Naive thymus-derived CD4-positive, alpha-beta T cell (primary cell): ENCODE measurements at regions of chr1 and their contacts with region 1.

Region 1: GRCh38 chr1:154352581-154353459 is 27.5 kb downstream of the ATP8B2 start:
- DNase-seq: peak in 8 of 9 donors; percentile 45 to 58 (median 52)
- ATAC-seq: peak; percentile 84
- H3K4me3 ChIP-seq: peak overlapping the region; percentile 79
- H3K4me3 Mint-ChIP-seq: peak overlapping the region; percentile 76 to 98 (median 91)
- H3K27ac ChIP-seq: peak overlapping the region; percentile 74
- H3K27ac Mint-ChIP-seq: peak overlapping the region; percentile 66 to 97 (median 88)
- H3K4me1 ChIP-seq: peaks cover 13 to 32% of the 10 kb centered on the region in 2 donors
- H3K4me1 Mint-ChIP-seq: peaks cover 29 to 64% (median 48%) of the 10 kb centered on the region in 7 donors
- H3K27me3 ChIP-seq: no peaks in the 10 kb centered on the region
- H3K27me3 Mint-ChIP-seq: peaks cover 0 to 2% (median 0%) of the 10 kb centered on the region in 5 donors

Region 2: GRCh38 chr1:153943991-153944826 is 408.6 kb before region 1 on chr1:
- CTCF ChIA-PET with region 1: no interaction called
- POLR2A ChIA-PET with region 1: no interaction called
- intact Hi-C with region 1: no loop called
- DNase-seq: peak in 1 of 9 donors; percentile 35
- ATAC-seq: no peak
- H3K4me3 ChIP-seq: peak overlapping the region; percentile 94
- H3K4me3 Mint-ChIP-seq: peak overlapping the region; percentile 93 to 99 (median 96)
- H3K27ac ChIP-seq: peak overlapping the region; percentile 89
- H3K27ac Mint-ChIP-seq: peak overlapping the region; percentile 90 to 98 (median 96)
- H3K4me1 ChIP-seq: peaks cover 23 to 25% of the 10 kb centered on the region in 2 donors
- H3K4me1 Mint-ChIP-seq: peaks cover 20 to 52% (median 41%) of the 10 kb centered on the region in 7 donors
- H3K27me3 ChIP-seq: no peaks in the 10 kb centered on the region
- H3K27me3 Mint-ChIP-seq: no peaks in the 10 kb centered on the region

Region 3: DNA sequence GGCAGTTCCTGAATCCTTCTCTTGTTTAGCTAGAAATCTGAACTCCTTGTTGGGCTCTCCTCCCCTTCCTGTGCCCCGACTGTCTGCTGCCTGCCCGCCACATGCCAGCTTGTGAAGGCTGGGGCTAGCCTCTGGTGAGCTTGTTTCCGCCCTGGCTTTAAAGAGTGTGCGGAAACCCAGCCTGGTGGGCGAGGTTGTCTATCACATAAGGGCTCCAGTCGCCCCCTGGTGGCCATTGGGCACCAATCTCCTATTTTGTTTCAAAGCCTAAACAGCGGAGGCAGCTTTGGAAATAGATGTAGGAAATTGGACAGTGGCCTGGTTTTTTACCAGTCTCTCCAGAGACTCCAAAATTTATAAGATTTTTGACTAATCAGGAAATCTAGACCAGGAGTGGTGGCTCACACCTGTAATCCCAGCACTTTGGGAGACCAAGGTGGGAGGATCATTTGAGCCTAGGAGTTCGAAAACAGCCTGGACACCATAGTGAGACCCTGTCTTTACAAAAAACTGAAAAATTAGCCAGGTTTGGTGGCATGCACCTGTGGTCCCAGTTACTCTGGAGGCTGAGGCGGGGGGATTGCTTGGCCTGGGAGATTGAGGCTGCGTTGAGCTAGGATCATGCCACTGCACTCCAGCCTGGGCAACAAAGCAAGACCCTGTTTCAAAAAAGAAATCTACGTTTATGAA is 17.6 kb before region 1 on chr1:
- CTCF ChIA-PET with region 1: interaction called, 129 read pairs
- POLR2A ChIA-PET with region 1: interaction called, 160 read pairs
- intact Hi-C with region 1: no loop called
- DNase-seq: peak; percentile 74 to 91 (median 87)
- ATAC-seq: peak; percentile 99
- H3K4me3 ChIP-seq: peak overlapping the region; percentile 23
- H3K4me3 Mint-ChIP-seq: peak overlapping the region; percentile 60 to 85 (median 72)
- H3K27ac ChIP-seq: peak overlapping the region; percentile 68
- H3K27ac Mint-ChIP-seq: peak overlapping the region; percentile 87 to 97 (median 95)
- H3K4me1 ChIP-seq: peaks cover 73% of the 10 kb centered on the region in 2 donors
- H3K4me1 Mint-ChIP-seq: peaks cover 50 to 88% (median 77%) of the 10 kb centered on the region in 7 donors
- H3K27me3 ChIP-seq: no peaks in the 10 kb centered on the region
- H3K27me3 Mint-ChIP-seq: no peaks in the 10 kb centered on the region

Region 4: GRCh38 chr1:154463512-154463990 is 110.7 kb after region 1 on chr1:
- CTCF ChIA-PET with region 1: interaction called, 3 read pairs
- POLR2A ChIA-PET with region 1: interaction called, 3 read pairs
- intact Hi-C with region 1: loop called in 1 of 2 experiments (anchors 1 kb)
- DNase-seq: peak in 8 of 9 donors; percentile 50 to 79 (median 70)
- ATAC-seq: peak; percentile 82
- H3K4me3 ChIP-seq: no peak overlapping the region
- H3K4me3 Mint-ChIP-seq: peak overlapping the region; percentile 58 to 96 (median 80)
- H3K27ac ChIP-seq: peak overlapping the region; percentile 78
- H3K27ac Mint-ChIP-seq: peak overlapping the region; percentile 86 to 96 (median 94)
- H3K4me1 ChIP-seq: peaks cover 38 to 78% of the 10 kb centered on the region in 2 donors
- H3K4me1 Mint-ChIP-seq: peaks cover 58 to 94% (median 81%) of the 10 kb centered on the region in 7 donors
- H3K27me3 ChIP-seq: no peaks in the 10 kb centered on the region
- H3K27me3 Mint-ChIP-seq: no peaks in the 10 kb centered on the region

Region 5: GRCh38 chr1:154736841-154737240 is 384.0 kb after region 1 on chr1:
- CTCF ChIA-PET with region 1: no interaction called
- POLR2A ChIA-PET with region 1: no interaction called
- intact Hi-C with region 1: no loop called
- DNase-seq: peak in 1 of 9 donors; percentile 64
- ATAC-seq: peak; percentile 70
- H3K4me3 ChIP-seq: no peak overlapping the region
- H3K4me3 Mint-ChIP-seq: peak overlapping the region in 1 of 10 donors; percentile 60
- H3K27ac ChIP-seq: no peak overlapping the region
- H3K27ac Mint-ChIP-seq: peak overlapping the region in 2 of 9 donors; percentile 27 to 82
- H3K4me1 ChIP-seq: no peaks in the 10 kb centered on the region
- H3K4me1 Mint-ChIP-seq: peaks cover 0 to 50% (median 2%) of the 10 kb centered on the region in 7 donors
- H3K27me3 ChIP-seq: no peaks in the 10 kb centered on the region
- H3K27me3 Mint-ChIP-seq: peaks cover 0 to 34% (median 5%) of the 10 kb centered on the region in 5 donors